ENCODE measurements at regions of chr10 and their contacts with region 1.

Region 1: GRCh38 chr10:127179612-127180250 is 16.7 kb downstream of the INSYN2A start:
- DNase-seq: no peak
- H3K4me3 ChIP-seq: no peak overlapping the region
- H3K27ac ChIP-seq: no peak overlapping the region
- H3K4me1 ChIP-seq: no peaks in the 10 kb centered on the region
- H3K27me3 ChIP-seq: no peaks in the 10 kb centered on the region
- CTCF ChIP-seq: no peak
- EP300 ChIP-seq: no peak
- POLR2A ChIP-seq: no peak

Region 2: GRCh38 chr10:127162841-127163240 is 16.9 kb before region 1 on chr10:
- intact Hi-C with region 1: loop called in 1 of 4 experiments (anchors 2 kb)
- DNase-seq: no peak
- H3K4me3 ChIP-seq: no peak overlapping the region
- H3K27ac ChIP-seq: no peak overlapping the region
- H3K4me1 ChIP-seq: peaks cover 3% of the 10 kb centered on the region
- H3K27me3 ChIP-seq: no peaks in the 10 kb centered on the region
- CTCF ChIP-seq: no peak
- EP300 ChIP-seq: no peak
- POLR2A ChIP-seq: no peak

Measured in ovary (tissue), 10 donors.